Gastrocnemius medialis (tissue), 4 donors: ENCODE measurements at regions of chr6 and their contacts with region 1.

Region 1: DNA sequence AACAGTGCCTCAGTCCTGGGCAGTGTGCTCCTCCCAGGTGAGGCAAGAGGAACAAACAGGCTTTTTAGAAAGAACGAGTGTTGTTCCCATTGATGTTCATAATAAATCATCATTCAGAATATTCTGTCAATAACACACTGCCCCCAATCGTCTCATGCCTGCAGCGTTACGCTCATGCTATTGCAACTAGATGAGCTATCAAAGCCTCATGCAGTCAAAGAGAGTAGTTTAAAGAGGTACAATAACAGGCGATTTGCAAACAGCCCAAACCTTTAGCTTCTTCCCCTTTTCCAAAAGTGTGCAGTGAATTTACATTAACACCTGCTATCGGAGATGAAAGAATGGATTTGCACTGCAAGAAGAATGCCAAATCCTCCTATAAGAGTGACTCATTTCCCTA is 1164.7 kb upstream of the MAP3K7 start:
- DNase-seq: no peak
- ATAC-seq: no peak
- H3K4me3 ChIP-seq: no peak overlapping the region
- H3K27ac ChIP-seq: no peak overlapping the region
- H3K4me1 ChIP-seq: no peaks in the 10 kb centered on the region
- H3K27me3 ChIP-seq: no peaks in the 10 kb centered on the region
- CTCF ChIP-seq: no peak
- POLR2A ChIP-seq: no peak

Region 2: DNA sequence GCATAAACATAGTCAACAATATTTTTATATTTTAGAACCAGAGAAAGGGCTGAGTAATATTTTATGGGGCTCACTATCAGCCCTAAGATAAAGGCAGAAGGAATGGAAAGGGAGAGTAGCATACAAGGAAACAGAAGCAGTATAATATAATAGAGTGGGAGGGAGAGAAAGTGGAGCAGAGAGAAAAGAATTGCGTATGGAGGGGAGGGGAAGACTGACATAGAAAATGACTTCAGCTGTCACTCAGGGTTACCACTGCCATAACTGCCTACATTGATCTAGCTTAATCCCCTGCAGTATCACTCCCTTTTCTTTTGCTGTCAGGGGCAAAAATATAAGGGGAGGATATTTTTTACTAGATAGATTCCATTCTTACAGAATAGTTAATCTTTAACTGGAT is 31.2 kb before region 1 on chr6:
- in situ Hi-C with region 1: no loop called
- intact Hi-C with region 1: loop called (anchors 1 kb)
- DNase-seq: no peak
- ATAC-seq: no peak
- H3K4me3 ChIP-seq: no peak overlapping the region
- H3K27ac ChIP-seq: no peak overlapping the region
- H3K4me1 ChIP-seq: no peaks in the 10 kb centered on the region
- H3K27me3 ChIP-seq: no peaks in the 10 kb centered on the region
- CTCF ChIP-seq: no peak
- POLR2A ChIP-seq: no peak